Activated T-helper 2 cell treated with anti-CD3 and anti-CD28 coated beads, Interferon-gamma antibody, Interleukin-2, Interleukin-4, amounts not matched to agents 10 μg/mL and 5 μg/mL and 100 μg/mL, durations not matched to agents 14 hours and 24 hours and 36 hours (primary cell): ENCODE measurements at regions of chr10 and their contacts with region 1.

Region 1: GRCh38 chr10:7484456-7485243 is 73.8 kb upstream of the SFMBT2 start:
- DNase-seq: peak; percentile 67
- H3K4me3 Mint-ChIP-seq: peak overlapping the region; percentile 30
- H3K27ac Mint-ChIP-seq: peak overlapping the region; percentile 78
- H3K4me1 Mint-ChIP-seq: peaks cover 78% of the 10 kb centered on the region
- H3K27me3 Mint-ChIP-seq: no peaks in the 10 kb centered on the region

Region 2: GRCh38 chr10:7184660-7185366 is 299.8 kb before region 1 on chr10:
- intact Hi-C with region 1: loop called (anchors 10 kb)
- DNase-seq: no peak
- H3K4me3 Mint-ChIP-seq: peak overlapping the region; percentile 47
- H3K27ac Mint-ChIP-seq: peak overlapping the region; percentile 87
- H3K4me1 Mint-ChIP-seq: peaks cover 58% of the 10 kb centered on the region
- H3K27me3 Mint-ChIP-seq: no peaks in the 10 kb centered on the region

Region 3: GRCh38 chr10:7417103-7417623 is 67.5 kb before region 1 on chr10:
- intact Hi-C with region 1: loop called (anchors 5 kb)
- DNase-seq: no peak
- H3K4me3 Mint-ChIP-seq: no peak overlapping the region
- H3K27ac Mint-ChIP-seq: peak overlapping the region; percentile 33
- H3K4me1 Mint-ChIP-seq: peaks cover 24% of the 10 kb centered on the region
- H3K27me3 Mint-ChIP-seq: peaks cover 46% of the 10 kb centered on the region